Head of caudate nucleus (tissue), 42 donors: ENCODE measurements at regions of chr9 and their contacts with region 1.

Region 1: GRCh38 chr9:112717661-112718341 is at the start of gene INIP:
- DNase-seq: peak; percentile 95 to 99 (median 98)

Region 2: GRCh38 chr9:112097712-112098688 is 619.8 kb before region 1 on chr9:
- intact Hi-C with region 1: loop called (anchors 10 kb)
- DNase-seq: peak in 41 of 42 donors; percentile 38 to 84 (median 64)

Region 3: GRCh38 chr9:112379177-112380101 is 338.4 kb before region 1 on chr9:
- intact Hi-C with region 1: loop called (anchors 5 kb)
- DNase-seq: peak; percentile 94 to 100 (median 99)

Region 4: DNA sequence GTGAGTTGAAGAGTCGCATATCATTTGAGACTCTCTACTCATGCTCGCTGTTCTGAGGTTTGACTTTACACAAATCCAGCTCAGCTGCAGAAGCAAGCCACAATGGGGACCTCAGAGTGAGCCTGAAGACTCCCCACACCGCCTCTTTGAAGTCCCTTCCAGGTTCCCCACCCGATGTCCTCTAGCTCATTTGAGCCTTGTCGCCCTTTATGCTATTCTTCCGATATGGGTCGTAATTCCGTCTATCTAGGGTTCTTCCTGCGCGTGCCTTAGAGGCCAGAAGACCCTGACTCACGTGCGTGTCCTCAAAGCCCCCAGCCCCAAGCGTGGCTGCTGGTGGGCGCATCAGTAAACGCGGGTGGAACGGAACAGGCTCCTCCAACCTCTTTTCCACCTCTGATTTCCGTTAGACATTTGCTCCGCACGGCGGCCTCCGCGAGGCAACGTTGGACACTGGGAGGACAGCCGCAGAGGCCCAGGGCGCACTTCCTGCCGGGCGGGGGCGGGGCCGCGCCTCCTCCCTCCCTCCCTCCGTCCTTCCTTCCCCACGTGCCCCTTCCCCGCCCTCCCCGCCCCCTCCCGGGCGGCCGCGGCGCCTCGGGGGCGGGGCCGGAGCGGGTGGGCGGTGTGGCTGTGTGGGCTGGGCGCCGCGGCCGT is 32.4 kb after region 1 on chr9 and contains the start of gene SNX30:
- intact Hi-C with region 1: loop called (anchors 2 kb)
- DNase-seq: peak; percentile 74 to 96 (median 91)

Region 5: DNA sequence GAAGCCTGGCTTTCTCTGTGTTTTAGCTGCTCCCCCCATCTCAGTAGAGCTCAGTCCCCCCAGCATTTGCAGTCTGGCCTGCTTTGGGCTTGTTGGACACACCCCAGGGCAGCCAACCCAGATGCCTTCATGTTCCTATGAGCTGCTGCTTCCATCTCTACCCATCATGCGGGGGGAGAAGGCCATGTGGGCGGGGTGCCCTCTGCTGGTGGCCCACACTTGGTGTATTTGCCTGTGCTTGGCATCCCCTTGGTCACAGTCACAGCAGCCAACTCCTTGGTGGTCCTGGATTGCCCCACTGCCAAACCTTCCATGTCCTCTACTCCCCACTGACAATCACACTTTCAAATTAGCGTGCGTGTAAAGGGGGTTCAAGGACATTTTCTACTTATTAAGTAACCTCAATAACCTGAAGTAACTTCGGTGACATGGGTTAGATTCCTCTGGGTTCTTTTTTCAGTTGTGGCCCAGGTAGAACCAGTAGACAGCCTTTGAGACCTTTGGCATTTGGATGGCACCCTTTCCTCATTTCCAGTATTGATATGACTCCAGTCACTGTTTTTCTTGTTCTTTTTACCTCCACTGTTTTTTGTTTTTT is 75.5 kb after region 1 on chr9:
- intact Hi-C with region 1: loop called (anchors 10 kb)
- DNase-seq: peak; percentile 14 to 93 (median 78)